ENCODE measurements at regions of chr17 and their contacts with region 1.

Region 1: GRCh38 chr17:40862985-40863733 is 3.9 kb downstream of the KRT12 start:
- DNase-seq: peak; percentile 93
- ATAC-seq: peak; percentile 99
- H3K4me3 Mint-ChIP-seq: peak overlapping the region; percentile 40; the same call in 1 of the 2 replicates
- H3K27ac Mint-ChIP-seq: no peak overlapping the region
- H3K4me1 Mint-ChIP-seq: peaks cover 6% of the 10 kb centered on the region
- H3K27me3 Mint-ChIP-seq: peaks cover 7% of the 10 kb centered on the region
- CTCF ChIP-seq: peak; percentile 68

Region 2: GRCh38 chr17:40873255-40873654 is 10.1 kb after region 1 on chr17:
- CTCF ChIA-PET with region 1: interaction called, 12 read pairs
- POLR2A ChIA-PET with region 1: no interaction called
- DNase-seq: no peak
- ATAC-seq: no peak
- H3K4me3 Mint-ChIP-seq: no peak overlapping the region
- H3K27ac Mint-ChIP-seq: no peak overlapping the region
- H3K4me1 Mint-ChIP-seq: peaks cover 20% of the 10 kb centered on the region
- H3K27me3 Mint-ChIP-seq: no peaks in the 10 kb centered on the region
- CTCF ChIP-seq: no peak

Region 3: DNA sequence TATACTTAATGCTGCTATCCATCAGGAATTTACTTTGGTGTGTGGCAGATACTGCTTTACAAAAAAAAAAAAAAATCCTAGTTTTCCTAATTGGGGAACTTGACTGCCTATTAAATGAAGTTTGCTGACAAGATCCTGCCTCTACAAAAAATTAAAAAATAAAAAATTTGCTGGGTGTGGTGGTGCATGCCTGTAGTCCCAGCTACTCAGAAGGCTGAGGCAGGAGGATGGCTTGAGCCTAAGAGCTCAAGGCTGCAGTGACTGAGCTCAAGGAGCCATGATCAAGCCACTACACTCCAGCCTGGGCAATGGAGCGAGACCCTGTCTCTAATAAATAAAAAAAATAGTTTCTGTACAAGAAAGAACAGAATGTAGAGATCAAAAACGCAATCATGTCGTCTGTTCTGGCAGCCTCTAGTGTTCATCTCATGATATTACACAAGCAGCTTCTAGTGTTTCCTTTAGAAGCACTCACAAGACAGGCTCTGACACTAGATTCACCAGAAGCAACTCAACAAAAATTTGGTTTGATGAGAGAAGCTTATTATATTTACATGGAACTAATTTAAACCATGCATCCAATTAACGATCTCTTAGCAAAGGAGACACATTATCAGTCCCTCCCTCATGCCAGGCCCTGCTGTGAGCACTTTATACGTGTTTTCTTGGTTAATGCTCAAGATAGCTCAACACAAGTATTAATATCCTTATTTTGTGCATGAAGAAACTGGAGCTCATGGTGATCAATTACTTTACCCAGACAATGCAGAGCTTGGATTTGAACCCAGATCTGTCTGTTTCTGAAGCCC is 459.1 kb after region 1 on chr17:
- CTCF ChIA-PET with region 1: interaction called, 11 read pairs
- POLR2A ChIA-PET with region 1: no interaction called
- DNase-seq: no peak
- ATAC-seq: peak; percentile 42; the same call in 1 of the 2 replicates
- H3K4me3 Mint-ChIP-seq: no peak overlapping the region
- H3K27ac Mint-ChIP-seq: no peak overlapping the region
- H3K4me1 Mint-ChIP-seq: 0 out of 2 replicates have a peak, but pooled peaks cover 3% of the 10 kb centered on the region
- H3K27me3 Mint-ChIP-seq: no peaks in the 10 kb centered on the region
- CTCF ChIP-seq: peak; percentile 64

Region 4: GRCh38 chr17:41329281-41329948 is 466.3 kb after region 1 on chr17:
- CTCF ChIA-PET with region 1: interaction called, 11 read pairs
- POLR2A ChIA-PET with region 1: no interaction called
- DNase-seq: peak; percentile 76
- ATAC-seq: peak; percentile 90
- H3K4me3 Mint-ChIP-seq: no peak overlapping the region
- H3K27ac Mint-ChIP-seq: no peak overlapping the region
- H3K4me1 Mint-ChIP-seq: no peaks in the 10 kb centered on the region
- H3K27me3 Mint-ChIP-seq: no peaks in the 10 kb centered on the region
- CTCF ChIP-seq: peak; percentile 86